ENCODE measurements at regions of chr7 and their contacts with region 1.

Region 1: DNA sequence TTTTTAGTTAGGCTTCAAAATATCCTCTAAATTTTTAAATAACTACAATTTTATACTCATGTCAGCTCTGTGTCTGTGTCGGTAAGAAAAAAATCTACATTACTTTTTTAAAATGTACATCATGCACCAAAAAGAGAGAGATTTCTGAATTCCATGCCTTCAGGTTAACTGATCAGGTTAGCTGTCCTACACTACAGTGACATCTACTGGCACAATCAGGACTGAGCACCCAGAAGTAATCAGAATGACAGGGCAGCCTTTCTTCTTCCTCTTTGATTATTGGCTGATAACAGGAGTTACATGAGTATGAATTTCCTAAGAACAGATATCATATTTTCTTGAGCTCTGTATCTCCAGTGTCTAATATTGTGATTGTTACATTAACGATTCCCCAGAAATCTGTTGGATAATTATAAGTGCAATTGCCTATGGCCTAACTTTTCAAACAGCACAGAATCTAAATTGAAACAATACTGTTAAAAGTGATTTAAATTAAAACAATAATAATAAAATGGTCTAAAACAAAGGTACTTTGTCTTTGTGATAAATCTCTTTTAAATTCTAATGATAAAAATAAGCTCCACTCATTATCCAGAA is 41.8 kb upstream of the HYCC1 start:
- DNase-seq: peak; percentile 81
- H3K4me3 Mint-ChIP-seq: no peak overlapping the region
- H3K27ac Mint-ChIP-seq: no peak overlapping the region
- H3K4me1 Mint-ChIP-seq: peaks cover under 1% of the 10 kb centered on the region
- H3K27me3 Mint-ChIP-seq: no peaks in the 10 kb centered on the region

Region 2: DNA sequence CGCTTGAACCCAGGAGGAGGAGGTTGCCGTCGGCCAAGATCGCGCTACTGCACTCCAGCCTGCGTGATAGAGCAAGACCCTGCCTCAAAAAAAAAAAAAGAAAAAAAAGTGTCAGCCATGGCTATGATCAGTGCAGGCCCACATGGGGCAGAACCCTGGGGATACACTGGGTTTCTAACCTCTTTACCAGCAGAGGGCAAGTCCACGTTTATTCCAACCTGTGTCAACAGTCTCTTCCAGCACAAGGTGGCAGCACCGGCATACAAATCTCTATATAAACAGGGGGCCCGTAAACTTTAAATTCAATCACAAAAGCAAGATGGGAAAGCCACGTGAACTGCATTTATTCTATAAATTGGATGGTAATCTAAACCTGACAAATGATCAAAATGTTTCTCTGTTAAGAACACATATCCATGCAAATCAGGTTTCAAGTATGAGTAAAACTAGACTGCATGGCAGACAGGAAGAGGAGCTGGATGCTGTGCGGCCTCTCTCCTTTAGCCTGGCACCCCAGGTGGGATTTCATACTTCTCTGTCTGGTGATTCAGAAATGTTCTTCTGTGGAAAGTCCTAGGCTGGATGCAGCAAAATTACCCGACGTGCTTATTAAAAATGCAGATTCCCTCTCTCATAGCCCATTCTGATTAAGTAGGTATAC is 495.7 kb before region 1 on chr7:
- CTCF ChIA-PET with region 1: interaction called, 31 read pairs
- intact Hi-C with region 1: loop called (anchors 1 kb)
- DNase-seq: peak; percentile 81
- H3K4me3 Mint-ChIP-seq: no peak overlapping the region
- H3K27ac Mint-ChIP-seq: no peak overlapping the region
- H3K4me1 Mint-ChIP-seq: peaks cover 28% of the 10 kb centered on the region
- H3K27me3 Mint-ChIP-seq: peaks cover 7% of the 10 kb centered on the region

Region 3: GRCh38 chr7:22809902-22810642 is 245.6 kb before region 1 on chr7:
- CTCF ChIA-PET with region 1: interaction called, 10 read pairs
- intact Hi-C with region 1: no loop called
- DNase-seq: no peak
- H3K4me3 Mint-ChIP-seq: no peak overlapping the region
- H3K27ac Mint-ChIP-seq: no peak overlapping the region
- H3K4me1 Mint-ChIP-seq: peaks cover 2% of the 10 kb centered on the region
- H3K27me3 Mint-ChIP-seq: no peaks in the 10 kb centered on the region

Region 4: DNA sequence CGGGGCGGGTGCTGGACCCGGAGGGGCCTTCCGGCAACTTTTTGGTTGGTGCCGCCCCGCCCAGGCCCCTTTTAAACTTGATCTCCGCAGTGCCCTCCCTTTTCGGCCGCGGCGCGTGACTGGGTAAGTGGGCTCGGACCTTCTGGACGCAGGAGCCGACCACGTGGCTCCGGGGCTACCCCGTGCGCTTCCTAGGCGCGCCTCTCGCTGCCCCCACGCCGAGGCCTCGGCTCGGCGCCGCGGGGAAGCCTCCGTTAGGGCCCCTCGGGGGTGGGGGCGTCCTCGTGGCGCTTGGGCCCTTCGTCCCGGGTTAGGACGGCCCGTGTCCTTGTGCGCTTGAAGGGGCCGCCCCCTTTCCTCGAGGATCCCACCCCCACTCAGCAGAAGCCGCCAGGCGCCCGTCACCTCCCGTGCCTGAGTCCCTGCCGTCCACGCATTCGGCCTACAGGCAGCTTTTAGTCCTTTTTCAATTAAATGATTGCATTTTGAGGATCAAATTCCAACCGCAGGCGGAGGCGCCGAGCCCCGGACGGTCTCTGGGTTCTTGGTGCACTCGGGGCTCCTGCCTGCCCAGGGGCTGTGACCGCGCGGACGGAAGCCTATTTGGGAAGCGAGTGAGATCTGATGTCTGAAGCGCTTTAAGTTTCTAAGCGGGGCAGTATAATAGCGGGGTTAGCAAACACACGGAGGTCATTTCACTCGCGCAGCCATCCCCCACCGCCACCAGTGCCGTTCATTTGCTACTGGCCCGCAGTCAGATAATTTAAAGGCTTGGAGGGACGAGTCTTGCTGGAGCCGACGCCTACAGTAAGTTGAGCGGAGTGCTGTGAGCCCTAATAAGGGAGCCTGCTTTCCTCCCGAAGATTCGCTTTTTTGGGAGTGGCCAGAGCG is 201.3 kb before region 1 on chr7:
- CTCF ChIA-PET with region 1: interaction called, 11 read pairs
- intact Hi-C with region 1: loop called (anchors 1 kb)
- DNase-seq: peak; percentile 78
- H3K4me3 Mint-ChIP-seq: peak overlapping the region; percentile 87
- H3K27ac Mint-ChIP-seq: peak overlapping the region; percentile 94
- H3K4me1 Mint-ChIP-seq: peaks cover 32% of the 10 kb centered on the region
- H3K27me3 Mint-ChIP-seq: peaks cover 3% of the 10 kb centered on the region

Region 5: GRCh38 chr7:23020742-23021401 is 34.8 kb before region 1 on chr7:
- CTCF ChIA-PET with region 1: interaction called, 11 read pairs
- intact Hi-C with region 1: no loop called
- DNase-seq: peak; percentile 43
- H3K4me3 Mint-ChIP-seq: no peak overlapping the region
- H3K27ac Mint-ChIP-seq: peak overlapping the region; percentile 72
- H3K4me1 Mint-ChIP-seq: peaks cover 25% of the 10 kb centered on the region
- H3K27me3 Mint-ChIP-seq: peaks cover 9% of the 10 kb centered on the region

Region 6: DNA sequence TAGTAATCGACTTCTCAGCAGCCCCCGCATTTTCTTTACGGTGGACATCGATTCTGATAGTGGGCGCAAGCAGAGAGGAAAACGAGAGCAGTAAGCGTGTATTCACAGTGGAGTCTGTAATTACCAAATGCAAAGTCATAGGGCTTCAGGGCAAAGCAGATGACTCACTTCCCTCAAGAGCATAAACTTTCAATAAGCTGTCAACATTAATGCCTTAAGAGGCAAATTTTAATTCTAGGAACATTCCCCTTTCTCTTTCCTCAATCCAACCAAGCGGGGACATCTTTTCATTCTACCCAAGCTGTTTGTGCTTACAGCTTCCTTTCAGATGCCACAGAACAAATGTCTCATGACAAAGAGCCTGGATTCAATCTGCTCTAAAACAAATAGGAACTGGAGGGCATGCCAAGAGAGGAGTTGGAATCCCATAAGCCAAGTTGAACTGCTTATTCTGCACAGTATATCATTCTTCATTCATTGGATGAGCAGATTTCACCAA is 292.1 kb after region 1 on chr7:
- CTCF ChIA-PET with region 1: no interaction called
- intact Hi-C with region 1: no loop called
- DNase-seq: peak; percentile 20
- H3K4me3 Mint-ChIP-seq: peak overlapping the region; percentile 8
- H3K27ac Mint-ChIP-seq: peak overlapping the region; percentile 64
- H3K4me1 Mint-ChIP-seq: peaks cover 32% of the 10 kb centered on the region
- H3K27me3 Mint-ChIP-seq: no peaks in the 10 kb centered on the region